ENCODE measurements at regions of chr19 and their contacts with region 1.

Region 1: GRCh38 chr19:46788262-46788967 is at the start of gene SLC1A5:
- DNase-seq: peak; percentile 95
- H3K4me3 Mint-ChIP-seq: peak within 1 kb of the TSS; percentile 95
- H3K27ac Mint-ChIP-seq: peak within 1 kb of the TSS; percentile 92
- H3K4me1 Mint-ChIP-seq: peaks cover 57% of the 10 kb centered on the region
- H3K27me3 Mint-ChIP-seq: peaks cover 2% of the 10 kb centered on the region
- total RNA-seq, gene SLC1A5: 264 and 267 TPM in 2 replicates

Region 2: GRCh38 chr19:46600384-46601317 is 187.8 kb before region 1 on chr19:
- intact Hi-C with region 1: loop called (anchors 5 kb)
- DNase-seq: peak; percentile 96
- H3K4me3 Mint-ChIP-seq: peak overlapping the region; percentile 100
- H3K27ac Mint-ChIP-seq: peak overlapping the region; percentile 100
- H3K4me1 Mint-ChIP-seq: peaks cover 19% of the 10 kb centered on the region
- H3K27me3 Mint-ChIP-seq: peaks cover 5% of the 10 kb centered on the region

Region 3: DNA sequence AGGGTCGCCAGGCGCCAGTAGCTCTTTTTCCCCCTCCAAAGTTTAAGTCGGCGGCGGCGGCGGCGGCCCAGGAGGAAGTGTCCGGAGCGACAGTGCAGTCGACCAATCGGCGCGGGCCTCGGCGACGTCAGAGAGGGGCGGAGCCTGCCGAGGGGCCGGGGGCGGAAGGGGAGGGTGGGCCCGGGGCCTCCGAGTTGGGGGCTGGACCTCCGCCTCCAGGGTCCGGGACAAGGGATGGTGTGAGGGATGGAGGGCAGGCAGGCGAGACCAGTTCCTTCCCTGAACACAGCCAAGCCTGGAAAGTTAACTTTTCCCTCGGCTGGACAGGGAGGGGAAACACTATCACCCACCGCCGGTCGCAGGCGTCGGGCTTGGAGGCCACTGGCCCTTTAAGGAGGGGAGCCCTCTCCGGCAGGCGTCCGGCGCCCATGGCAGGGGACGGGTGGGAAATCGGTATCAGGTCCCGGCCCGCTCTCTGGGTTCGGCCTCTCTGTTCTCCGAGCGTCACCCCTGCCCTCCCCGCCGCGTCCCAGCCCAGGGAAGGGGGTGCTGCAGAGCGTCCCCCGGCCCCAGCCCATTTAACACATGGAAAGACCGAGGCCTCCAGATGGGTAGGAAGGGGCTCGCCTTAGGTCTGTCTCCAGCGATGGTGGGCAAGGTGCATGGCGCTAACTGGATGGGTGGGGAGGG is 71.2 kb before region 1 on chr19 and contains the start of gene PRKD2:
- intact Hi-C with region 1: loop called (anchors 1 kb)
- DNase-seq: peak; percentile 86
- H3K4me3 Mint-ChIP-seq: peak within 1 kb of the TSS; percentile 93
- H3K27ac Mint-ChIP-seq: peak within 1 kb of the TSS; percentile 94
- H3K4me1 Mint-ChIP-seq: peaks cover 42% of the 10 kb centered on the region
- H3K27me3 Mint-ChIP-seq: no peaks in the 10 kb centered on the region
- total RNA-seq, gene PRKD2: 88.6 and 92.9 TPM in 2 replicates

Region 4: DNA sequence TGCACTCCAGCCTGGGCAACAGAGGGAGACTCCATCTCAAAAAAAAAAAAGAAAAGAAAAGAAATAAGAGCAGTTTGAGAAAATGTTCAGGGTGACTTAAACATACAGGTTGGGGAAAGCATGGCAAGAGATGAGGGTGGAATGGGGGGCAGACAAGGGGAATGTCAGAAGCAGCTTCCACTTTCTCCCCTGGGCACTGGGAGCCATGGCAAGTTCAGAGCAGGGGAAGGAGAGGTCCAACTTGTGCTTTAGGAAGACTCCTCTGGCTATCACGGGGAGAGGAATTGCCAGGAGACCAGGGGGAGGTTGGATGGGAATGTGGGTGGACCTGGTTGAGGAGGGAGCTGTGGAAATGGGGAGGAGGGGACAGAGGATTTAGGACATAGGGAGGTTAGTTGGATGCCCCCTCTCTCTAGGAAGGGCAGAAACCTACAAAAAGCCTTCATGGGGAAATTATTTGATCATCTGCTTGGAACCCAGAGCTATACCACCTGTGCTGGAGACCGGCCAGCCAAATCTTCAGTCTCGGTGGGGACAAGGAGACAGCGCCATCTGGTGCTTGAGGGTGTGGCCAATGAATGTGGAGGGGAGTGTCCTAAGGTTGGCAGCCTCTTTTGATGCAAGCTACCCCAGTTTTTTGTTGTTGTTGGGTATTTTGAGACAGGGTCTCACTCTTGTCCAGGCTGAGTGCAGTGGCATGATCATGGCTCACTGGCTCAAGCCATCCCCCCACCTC is 34.8 kb before region 1 on chr19:
- intact Hi-C with region 1: loop called (anchors 1 kb)
- DNase-seq: peak; percentile 56
- H3K4me3 Mint-ChIP-seq: no peak overlapping the region
- H3K27ac Mint-ChIP-seq: no peak overlapping the region
- H3K4me1 Mint-ChIP-seq: peaks cover 11% of the 10 kb centered on the region
- H3K27me3 Mint-ChIP-seq: no peaks in the 10 kb centered on the region

Region 5: DNA sequence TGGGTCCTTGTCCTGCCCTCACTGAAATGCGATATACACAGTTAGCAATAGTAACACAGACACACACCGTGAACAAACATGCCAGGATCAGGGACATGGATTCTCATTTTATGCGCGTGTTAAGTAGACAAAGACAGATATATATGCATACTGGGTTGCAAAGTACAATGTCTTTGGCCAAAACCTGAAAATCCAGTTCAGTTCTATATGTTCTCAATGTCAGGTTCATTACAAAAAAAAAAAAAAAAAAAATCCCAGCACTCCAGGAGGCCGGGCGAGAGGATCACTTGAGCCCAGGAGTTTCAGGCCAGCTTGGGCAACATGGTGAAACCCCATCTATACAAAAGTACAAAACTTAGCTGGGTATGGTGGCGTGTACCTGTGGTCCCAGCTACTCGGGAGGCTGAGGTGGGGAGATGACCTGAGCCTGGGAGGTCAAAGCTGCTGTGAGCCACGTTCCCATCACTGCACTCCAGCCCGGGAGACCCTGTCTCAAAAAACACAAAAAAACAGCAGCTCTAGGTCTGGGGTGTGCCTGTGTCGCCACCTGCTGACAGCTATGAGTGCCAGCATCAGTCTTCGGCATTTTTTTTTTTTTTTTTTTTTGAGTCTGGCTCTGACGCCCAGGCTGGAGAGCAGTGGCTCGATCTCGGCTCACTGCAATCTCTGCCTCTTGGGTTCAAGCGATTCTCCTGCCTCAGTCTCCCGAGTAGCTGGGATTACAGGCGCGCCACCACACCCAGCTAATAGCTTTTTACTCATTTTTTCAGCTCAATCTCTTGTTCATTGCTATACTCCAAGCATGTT is 51.9 kb after region 1 on chr19:
- intact Hi-C with region 1: loop called (anchors 1 kb)
- DNase-seq: peak; percentile 32
- H3K4me3 Mint-ChIP-seq: no peak overlapping the region
- H3K27ac Mint-ChIP-seq: no peak overlapping the region
- H3K4me1 Mint-ChIP-seq: no peaks in the 10 kb centered on the region
- H3K27me3 Mint-ChIP-seq: no peaks in the 10 kb centered on the region

Region 6: DNA sequence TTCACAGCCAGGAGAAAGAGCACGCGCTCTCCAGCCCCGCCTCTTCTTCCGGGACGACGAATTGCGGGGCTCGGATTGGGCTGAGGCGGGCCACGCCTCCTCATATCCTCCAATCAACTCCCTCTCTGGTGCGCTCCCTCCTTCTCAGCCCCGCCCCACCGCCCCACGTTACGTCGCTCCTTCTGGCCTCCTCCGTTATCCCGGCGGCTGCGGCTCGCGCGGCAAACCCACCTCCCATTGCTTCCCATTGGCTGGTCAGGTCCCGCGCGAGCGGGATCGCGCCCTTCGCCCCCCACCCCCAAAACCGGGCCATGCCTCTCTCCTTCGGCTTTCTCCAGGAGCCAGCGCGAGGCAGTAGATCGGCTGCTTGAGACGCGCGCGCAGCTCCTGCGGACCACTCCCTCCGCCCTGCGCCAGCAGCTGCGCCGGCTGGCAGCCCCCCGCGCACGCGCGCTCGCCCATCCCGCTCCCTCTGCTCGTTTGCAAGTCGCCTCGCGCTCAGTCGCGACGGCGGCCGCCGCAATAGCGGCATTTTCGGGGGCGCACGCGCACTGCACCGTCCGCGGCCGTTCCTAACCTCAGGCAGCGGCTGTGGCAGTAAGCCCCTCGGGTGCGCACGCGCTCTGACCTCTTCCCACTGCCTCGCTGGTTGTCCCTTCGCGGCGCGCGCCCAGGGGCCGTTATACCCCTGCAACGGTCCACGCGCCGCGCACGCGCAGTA is 71.9 kb after region 1 on chr19:
- intact Hi-C with region 1: loop called (anchors 1 kb)
- DNase-seq: peak; percentile 97
- H3K4me3 Mint-ChIP-seq: peak overlapping the region; percentile 92
- H3K27ac Mint-ChIP-seq: peak overlapping the region; percentile 97
- H3K4me1 Mint-ChIP-seq: peaks cover 25% of the 10 kb centered on the region
- H3K27me3 Mint-ChIP-seq: no peaks in the 10 kb centered on the region

Region 7: DNA sequence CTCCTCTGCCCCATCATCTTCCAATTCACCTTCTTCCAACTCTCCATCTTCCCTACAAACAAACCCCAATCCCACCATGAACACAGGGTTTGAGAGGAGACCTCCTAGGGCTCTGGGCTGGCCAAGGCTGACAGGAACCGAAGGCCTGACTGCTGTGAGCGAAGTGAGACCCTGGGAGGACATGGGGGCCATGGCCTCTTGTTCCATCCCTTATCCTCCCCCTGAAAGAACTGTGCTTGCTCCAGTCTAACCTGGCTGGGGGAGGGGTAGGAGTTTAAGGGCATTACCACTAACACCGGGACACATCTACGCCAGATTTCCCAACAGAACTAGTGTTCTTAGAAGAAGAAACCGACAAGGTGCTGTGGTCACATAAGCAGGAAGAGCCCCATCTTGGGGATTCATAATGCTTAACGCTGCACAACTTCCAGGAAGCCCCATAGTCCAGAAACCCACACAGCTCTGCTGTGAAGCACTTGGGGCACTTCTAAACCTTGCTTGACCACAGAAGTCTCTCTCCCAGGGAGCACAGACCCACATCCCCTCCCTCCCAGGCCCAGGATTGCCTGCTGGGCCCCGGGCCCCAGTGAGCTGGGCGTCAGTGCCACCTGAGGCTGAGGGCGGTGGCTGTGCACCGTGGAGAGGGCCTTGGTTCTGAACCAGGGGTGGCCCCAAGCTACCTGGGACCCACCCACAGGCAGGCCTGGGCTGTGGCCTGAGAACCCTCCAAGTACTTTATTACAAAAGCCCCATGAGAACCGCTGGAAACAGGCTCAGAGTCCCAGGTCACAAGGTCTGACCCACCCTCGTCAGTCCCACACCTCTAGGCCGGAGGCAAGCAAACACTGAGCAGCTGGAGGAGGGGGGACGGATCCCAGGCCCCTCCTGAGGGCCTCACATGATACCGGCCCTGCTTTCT is 306.4 kb after region 1 on chr19:
- intact Hi-C with region 1: loop called (anchors 10 kb)
- DNase-seq: peak; percentile 60
- H3K4me3 Mint-ChIP-seq: peak overlapping the region; percentile 93
- H3K27ac Mint-ChIP-seq: peak overlapping the region; percentile 99
- H3K4me1 Mint-ChIP-seq: peaks cover 72% of the 10 kb centered on the region
- H3K27me3 Mint-ChIP-seq: no peaks in the 10 kb centered on the region

Measured in activated T-helper 1 cell treated with anti-CD3 and anti-CD28 coated beads, Interleukin-12 subunit alpha, Interleukin-12 subunit beta, Interleukin-2, Interleukin-4 antibody, amounts not matched to agents 30 ng/mL and 10 ng/mL and 1 ng/mL, durations not matched to agents 14 hours and 24 hours and 36 hours (primary cell).